Dorsolateral prefrontal cortex (tissue), 120 donors: ENCODE measurements at regions of chr9 and their contacts with region 1.

Region 1: DNA sequence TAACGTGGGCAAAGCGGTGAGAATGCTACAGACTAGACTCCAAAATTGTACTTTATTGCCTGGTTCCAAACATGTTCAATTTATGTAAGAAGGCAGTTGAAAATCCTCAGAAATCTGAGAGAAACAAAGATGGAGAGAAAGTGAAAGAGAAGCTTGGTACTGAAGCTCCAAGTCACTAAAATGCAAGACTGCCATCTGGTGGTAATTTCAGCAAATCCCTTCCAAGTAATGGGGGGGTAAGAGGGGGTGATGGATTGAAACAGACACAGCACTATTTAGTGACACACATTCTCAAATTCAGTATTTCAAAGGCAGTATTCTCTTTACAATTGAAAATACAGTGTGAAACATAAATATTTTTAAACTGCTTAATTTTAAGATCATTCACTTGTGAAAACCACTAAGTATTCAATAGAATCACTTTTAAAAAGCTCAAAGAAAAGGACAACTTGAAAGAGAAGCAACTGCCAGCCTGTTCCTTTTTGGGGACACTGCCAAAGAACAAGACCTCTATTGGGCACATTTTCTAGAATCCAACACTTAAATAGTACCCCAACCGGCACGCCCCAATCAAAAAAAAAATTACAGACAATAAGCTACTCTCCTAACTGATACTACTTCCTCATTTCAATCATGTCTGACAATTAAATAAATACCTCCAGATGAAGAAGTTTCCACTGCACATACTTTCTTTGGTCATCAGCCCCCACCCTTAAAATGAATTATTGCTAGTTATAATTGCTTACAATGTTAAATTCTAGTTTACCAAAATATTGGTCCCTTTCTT is 131.5 kb downstream of the AGTPBP1 start:
- DNase-seq: peak in 2 of 10 donors; percentile 44 to 45
- H3K4me3 ChIP-seq: peak overlapping the region in 54 of 59 donors; percentile 4 to 55 (median 39)
- H3K27ac ChIP-seq: peak overlapping the region; percentile 61 to 98 (median 93)
- H3K27me3 ChIP-seq: no peaks in the 10 kb centered on the region
- CTCF ChIP-seq: peak; percentile 67 to 96 (median 87)

Region 2: DNA sequence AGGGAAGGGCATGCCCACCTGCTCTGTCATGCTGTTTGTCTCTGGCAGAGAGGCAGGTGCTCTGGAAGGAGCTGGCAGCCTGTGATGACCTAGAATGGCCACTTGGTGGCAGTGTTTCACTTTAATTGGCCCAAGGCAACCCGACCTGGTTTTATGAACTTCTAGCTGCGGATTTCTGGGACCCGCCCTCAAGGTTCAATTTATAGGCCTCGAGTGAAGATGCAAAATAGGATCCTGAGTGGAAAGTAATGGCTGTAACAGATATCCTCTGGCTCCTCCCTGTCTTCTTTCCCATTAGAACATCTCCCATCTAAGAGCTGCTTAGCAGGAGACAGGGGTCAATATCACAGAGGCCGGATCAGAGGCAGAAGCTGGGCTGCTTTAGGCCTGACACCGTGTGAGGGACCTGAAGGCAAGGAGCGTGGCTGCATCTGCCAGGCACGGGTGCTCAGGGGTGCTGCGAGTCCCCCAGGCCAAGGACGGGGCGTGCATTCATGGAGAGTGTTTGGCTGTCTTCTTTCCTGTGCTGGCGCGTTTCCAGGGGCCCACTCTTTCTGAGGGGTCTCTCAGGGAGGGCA is 1213.0 kb before region 1 on chr9:
- intact Hi-C with region 1: loop called in 1 of 2 experiments (anchors 10 kb)
- DNase-seq: peak; percentile 47 to 82 (median 70)
- H3K4me3 ChIP-seq: peak overlapping the region in 3 of 59 donors; percentile 7 to 18 (median 11)
- H3K27ac ChIP-seq: peak overlapping the region in 2 of 59 donors; percentile 16 to 21
- H3K27me3 ChIP-seq: peaks cover 0 to 3% (median 0%) of the 10 kb centered on the region in 45 donors
- CTCF ChIP-seq: peak; percentile 78 to 99 (median 96)

Region 3: GRCh38 chr9:85425153-85425611 is 185.1 kb before region 1 on chr9:
- intact Hi-C with region 1: loop called in 1 of 2 experiments (anchors 10 kb)
- DNase-seq: peak in 9 of 10 donors; percentile 30 to 77 (median 66)
- H3K4me3 ChIP-seq: peak overlapping the region in 26 of 59 donors; percentile 1 to 45 (median 14)
- H3K27ac ChIP-seq: peak overlapping the region in 18 of 59 donors; percentile 1 to 50 (median 21)
- H3K27me3 ChIP-seq: no peaks in the 10 kb centered on the region
- CTCF ChIP-seq: peak; percentile 42 to 81 (median 73)

Region 4: GRCh38 chr9:85741875-85742629 is 131.8 kb after region 1 on chr9 and contains the start of gene AGTPBP1:
- intact Hi-C with region 1: loop called in 1 of 2 experiments (anchors 5 kb)
- DNase-seq: peak; percentile 81 to 95 (median 91)
- H3K4me3 ChIP-seq: peak within 1 kb of the TSS; percentile 54 to 99 (median 93)
- H3K27ac ChIP-seq: peak within 1 kb of the TSS; percentile 76 to 97 (median 90)
- H3K27me3 ChIP-seq: no peaks in the 10 kb centered on the region
- CTCF ChIP-seq: peak in 27 of 56 donors; percentile 4 to 49 (median 21)
- total RNA-seq, gene AGTPBP1: 69.0 to 186 (median 111) TPM